Activated CD4-positive, alpha-beta T cell treated with anti-CD3 and anti-CD28 coated beads for 36 hours (primary cell): ENCODE measurements at regions of chr4 and their contacts with region 1.

Region 1: GRCh38 chr4:99054428-99054994 is 34.1 kb downstream of the ADH5 start:
- DNase-seq: no peak
- ATAC-seq: peak; percentile 23
- H3K4me3 Mint-ChIP-seq: no peak overlapping the region
- H3K27ac Mint-ChIP-seq: peak overlapping the region; percentile 63
- H3K4me1 Mint-ChIP-seq: peaks cover 44% of the 10 kb centered on the region
- H3K27me3 Mint-ChIP-seq: no peaks in the 10 kb centered on the region

Region 2: GRCh38 chr4:98493296-98493695 is 561.2 kb before region 1 on chr4:
- CTCF ChIA-PET with region 1: no interaction called
- POLR2A ChIA-PET with region 1: no interaction called
- intact Hi-C with region 1: no loop called
- DNase-seq: no peak
- ATAC-seq: peak; percentile 84
- H3K4me3 Mint-ChIP-seq: no peak overlapping the region
- H3K27ac Mint-ChIP-seq: peak overlapping the region; percentile 34
- H3K4me1 Mint-ChIP-seq: peaks cover 22% of the 10 kb centered on the region
- H3K27me3 Mint-ChIP-seq: no peaks in the 10 kb centered on the region

Region 3: GRCh38 chr4:99028187-99028586 is 26.3 kb before region 1 on chr4:
- CTCF ChIA-PET with region 1: interaction called, 14 read pairs
- POLR2A ChIA-PET with region 1: interaction called, 3 read pairs
- intact Hi-C with region 1: no loop called
- DNase-seq: peak; percentile 29
- ATAC-seq: peak; percentile 84
- H3K4me3 Mint-ChIP-seq: no peak overlapping the region
- H3K27ac Mint-ChIP-seq: no peak overlapping the region
- H3K4me1 Mint-ChIP-seq: peaks cover 66% of the 10 kb centered on the region
- H3K27me3 Mint-ChIP-seq: no peaks in the 10 kb centered on the region

Region 4: DNA sequence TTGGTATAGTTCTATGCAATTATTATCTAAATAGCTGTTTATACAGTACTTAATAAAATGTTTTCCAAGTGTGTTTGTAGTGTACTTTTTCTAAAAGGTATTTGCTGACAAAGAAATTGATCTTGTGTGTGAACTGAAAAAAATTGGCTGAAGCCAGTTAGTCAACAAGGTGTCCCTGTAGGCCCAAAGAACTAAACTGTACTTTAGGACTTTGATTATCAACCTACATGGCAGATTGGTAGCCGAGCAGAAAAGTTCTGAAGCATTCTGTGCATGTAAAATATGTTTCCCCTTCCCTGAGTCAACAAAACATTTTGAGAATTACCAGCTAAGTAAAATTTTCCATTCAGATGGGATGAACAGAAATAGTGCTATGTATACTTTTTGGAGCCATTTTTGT is 13.1 kb after region 1 on chr4:
- CTCF ChIA-PET with region 1: interaction called, 15 read pairs
- POLR2A ChIA-PET with region 1: no interaction called
- intact Hi-C with region 1: no loop called
- DNase-seq: no peak
- ATAC-seq: no peak
- H3K4me3 Mint-ChIP-seq: no peak overlapping the region
- H3K27ac Mint-ChIP-seq: no peak overlapping the region
- H3K4me1 Mint-ChIP-seq: peaks cover 2% of the 10 kb centered on the region
- H3K27me3 Mint-ChIP-seq: no peaks in the 10 kb centered on the region